ENCODE measurements at regions of chr16 and their contacts with region 1.

Region 1: DNA sequence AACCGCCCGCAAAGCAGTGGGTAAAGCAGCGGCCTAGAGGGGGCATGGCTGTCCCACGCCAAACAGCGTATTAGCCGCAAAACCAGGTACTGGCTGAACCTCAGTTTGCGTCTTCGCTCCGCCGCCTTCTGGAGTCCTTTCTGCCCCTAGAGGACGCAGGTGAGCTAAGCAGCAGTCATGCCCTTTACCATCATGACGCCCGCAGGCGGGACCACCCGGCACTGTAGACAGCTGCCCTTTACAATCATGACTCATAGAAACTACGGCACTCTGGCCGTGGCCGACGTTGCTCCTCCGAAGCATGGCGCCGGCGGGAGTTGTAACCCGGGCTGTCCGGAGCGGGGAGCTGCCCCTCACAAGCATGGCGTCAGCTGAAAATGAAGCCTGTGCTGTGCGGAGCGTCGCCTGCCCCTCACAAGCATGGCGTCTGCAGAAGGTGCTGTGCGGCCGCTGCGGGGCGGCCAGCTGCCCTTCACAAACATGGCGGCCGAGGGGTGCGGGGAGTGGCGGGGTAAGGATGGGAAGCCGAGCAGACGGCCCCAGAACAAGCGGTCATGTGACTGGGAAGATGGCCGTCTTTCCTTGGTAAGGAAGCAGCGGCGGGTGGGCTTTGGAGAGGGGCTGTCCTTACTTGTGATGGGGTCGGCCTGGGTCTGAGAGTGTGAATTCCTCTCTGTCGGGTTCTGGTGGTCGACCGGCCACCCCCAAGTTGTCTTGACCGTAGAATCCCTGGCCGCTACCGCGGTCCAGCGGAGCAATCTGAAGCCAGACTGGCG is at the start of gene VPS35L:
- DNase-seq: peak; percentile 99
- H3K4me3 ChIP-seq: peak within 1 kb of the TSS; percentile 93
- H3K27ac ChIP-seq: peak within 1 kb of the TSS; percentile 80
- H3K27me3 ChIP-seq: no peaks in the 10 kb centered on the region
- CTCF ChIP-seq: peak; percentile 68
- polyA plus RNA-seq, gene VPS35L: 67.1 and 77.8 TPM in 2 replicates

Region 2: GRCh38 chr16:19446300-19446846 is 109.0 kb before region 1 on chr16:
- CTCF ChIA-PET with region 1: no interaction called
- POLR2A ChIA-PET with region 1: interaction called, 12 read pairs
- DNase-seq: no peak
- H3K4me3 ChIP-seq: no peak overlapping the region
- H3K27ac ChIP-seq: no peak overlapping the region
- H3K27me3 ChIP-seq: no peaks in the 10 kb centered on the region
- CTCF ChIP-seq: no peak

Region 3: GRCh38 chr16:19542138-19542821 is 13.1 kb before region 1 on chr16:
- CTCF ChIA-PET with region 1: interaction called, 21 read pairs
- POLR2A ChIA-PET with region 1: interaction called, 5 read pairs
- DNase-seq: no peak
- H3K4me3 ChIP-seq: no peak overlapping the region
- H3K27ac ChIP-seq: no peak overlapping the region
- H3K27me3 ChIP-seq: no peaks in the 10 kb centered on the region
- CTCF ChIP-seq: no peak

Region 4: DNA sequence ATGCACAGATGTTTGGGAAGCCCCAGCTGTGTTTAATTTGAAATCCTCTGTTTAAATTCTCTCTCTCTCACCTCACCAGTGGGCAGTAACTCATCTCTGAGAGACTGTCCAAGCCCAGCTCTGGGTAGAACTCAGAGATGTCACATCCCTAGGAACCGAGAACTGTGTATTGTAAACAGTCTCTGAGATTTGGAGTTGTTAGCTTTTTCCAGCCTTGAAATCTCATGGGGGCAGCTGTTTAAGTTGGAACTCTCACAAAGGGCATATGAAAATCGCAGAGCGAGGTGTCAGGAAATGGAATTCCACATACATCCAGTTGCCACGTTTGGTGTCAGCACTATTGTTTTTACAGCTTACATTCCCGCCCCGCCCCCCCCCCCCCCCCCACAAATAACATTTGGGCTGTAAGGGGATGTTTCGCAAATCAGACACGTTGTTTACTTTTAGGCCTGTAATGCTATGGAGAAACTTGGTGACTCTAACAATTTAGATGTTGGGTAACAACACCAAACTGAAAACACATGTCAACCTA is 34.5 kb after region 1 on chr16:
- CTCF ChIA-PET with region 1: interaction called, 15 read pairs
- POLR2A ChIA-PET with region 1: interaction called, 12 read pairs
- DNase-seq: peak; percentile 71
- H3K4me3 ChIP-seq: no peak overlapping the region
- H3K27ac ChIP-seq: peak overlapping the region; percentile 88
- H3K27me3 ChIP-seq: no peaks in the 10 kb centered on the region
- CTCF ChIP-seq: no peak

Region 5: GRCh38 chr16:19808061-19808621 is 252.8 kb after region 1 on chr16:
- CTCF ChIA-PET with region 1: no interaction called
- POLR2A ChIA-PET with region 1: no interaction called
- DNase-seq: no peak
- H3K4me3 ChIP-seq: no peak overlapping the region
- H3K27ac ChIP-seq: peak overlapping the region; percentile 12
- H3K27me3 ChIP-seq: no peaks in the 10 kb centered on the region
- CTCF ChIP-seq: no peak

Region 6: DNA sequence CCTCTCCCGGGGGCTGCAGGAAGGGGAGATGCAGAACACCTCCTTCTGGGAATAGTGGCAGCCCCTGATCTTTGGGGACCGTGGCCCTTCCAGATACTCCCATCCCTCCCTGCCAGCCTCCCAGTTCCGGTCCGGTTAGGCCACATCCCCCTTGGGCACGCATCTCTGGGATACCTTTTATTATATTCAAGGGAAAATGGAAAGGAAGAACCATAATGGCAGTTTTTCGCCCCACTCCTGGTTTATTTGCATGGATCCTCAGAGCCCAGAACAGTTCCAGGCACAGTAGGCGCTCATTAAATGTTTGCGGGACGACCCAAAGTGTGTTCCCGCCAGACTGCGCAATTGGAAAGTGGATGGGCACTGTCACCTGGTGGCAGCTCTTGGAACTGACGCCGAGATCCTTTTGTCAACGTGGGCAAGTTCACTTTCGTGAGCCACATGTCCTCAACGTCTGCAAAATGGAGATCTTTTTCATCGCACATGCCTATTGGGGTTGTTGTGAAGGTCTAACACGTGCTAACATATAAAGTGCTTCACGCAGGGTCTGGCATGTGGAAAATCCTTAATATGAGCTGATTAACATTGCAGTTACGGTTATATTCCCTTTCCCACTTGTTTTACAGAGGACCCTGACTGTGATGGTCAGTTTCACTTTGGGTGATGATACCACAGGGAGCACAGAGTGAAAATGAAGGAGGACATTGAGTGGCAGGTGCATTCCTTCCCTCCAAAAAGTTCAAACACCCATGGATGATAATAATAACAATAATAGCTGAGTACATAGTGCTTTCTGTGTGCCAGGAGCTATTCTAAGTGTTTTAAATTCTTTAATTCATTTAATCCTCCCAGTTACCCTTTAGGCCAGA is 331.0 kb after region 1 on chr16:
- CTCF ChIA-PET with region 1: interaction called, 39 read pairs
- POLR2A ChIA-PET with region 1: no interaction called
- DNase-seq: peak; percentile 54
- H3K4me3 ChIP-seq: no peak overlapping the region
- H3K27ac ChIP-seq: no peak overlapping the region
- H3K27me3 ChIP-seq: peaks cover 3% of the 10 kb centered on the region
- CTCF ChIP-seq: peak; percentile 100

Region 7: DNA sequence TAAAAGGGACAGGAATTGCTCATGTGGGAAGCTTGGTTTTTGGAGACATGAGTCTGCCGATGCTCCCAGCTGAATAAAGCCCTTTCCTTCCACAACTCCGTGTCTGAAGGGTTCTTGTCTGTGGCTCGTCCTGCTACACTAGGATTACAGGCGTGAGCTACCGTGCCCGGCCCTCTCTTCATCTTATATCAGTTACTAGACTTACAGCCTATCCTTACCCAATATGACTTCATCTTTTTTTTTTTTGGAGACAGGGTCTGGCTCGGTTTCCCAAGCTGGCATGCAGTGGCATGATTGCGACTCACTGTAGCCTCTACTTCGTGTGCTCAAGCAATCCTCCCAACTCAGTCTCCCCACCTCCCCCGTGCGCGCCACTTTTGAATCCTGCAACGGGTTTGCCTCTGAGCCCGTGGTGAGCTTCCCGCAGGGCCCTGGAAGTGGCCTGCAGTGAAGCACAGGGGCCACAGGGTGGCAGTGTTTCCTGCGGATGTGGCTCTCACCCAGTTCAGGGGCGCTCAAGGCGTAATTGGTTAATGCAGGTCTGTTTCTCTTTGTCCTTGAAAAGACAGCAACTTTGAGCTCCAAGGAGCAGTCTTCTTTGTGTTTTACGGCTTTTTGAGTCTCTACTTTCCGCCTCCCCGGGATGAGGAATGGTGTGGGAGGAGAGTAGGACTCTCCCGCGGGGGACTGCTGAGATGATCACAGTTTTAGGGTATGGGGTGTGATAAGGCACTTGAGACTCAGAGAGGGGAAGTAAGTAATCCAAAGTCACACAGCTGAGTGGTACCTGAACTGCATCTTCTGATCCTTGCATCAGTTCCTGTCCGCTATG is 352.0 kb after region 1 on chr16:
- CTCF ChIA-PET with region 1: interaction called, 17 read pairs
- POLR2A ChIA-PET with region 1: interaction called, 5 read pairs
- DNase-seq: peak; percentile 37
- H3K4me3 ChIP-seq: peak overlapping the region; percentile 22; the same call in 1 of the 2 replicates
- H3K27ac ChIP-seq: no peak overlapping the region
- H3K27me3 ChIP-seq: no peaks in the 10 kb centered on the region
- CTCF ChIP-seq: peak; percentile 100

Measured in AG04450 (cell line).